ENCODE measurements at regions of chr13 and their contacts with region 1.

Region 1: DNA sequence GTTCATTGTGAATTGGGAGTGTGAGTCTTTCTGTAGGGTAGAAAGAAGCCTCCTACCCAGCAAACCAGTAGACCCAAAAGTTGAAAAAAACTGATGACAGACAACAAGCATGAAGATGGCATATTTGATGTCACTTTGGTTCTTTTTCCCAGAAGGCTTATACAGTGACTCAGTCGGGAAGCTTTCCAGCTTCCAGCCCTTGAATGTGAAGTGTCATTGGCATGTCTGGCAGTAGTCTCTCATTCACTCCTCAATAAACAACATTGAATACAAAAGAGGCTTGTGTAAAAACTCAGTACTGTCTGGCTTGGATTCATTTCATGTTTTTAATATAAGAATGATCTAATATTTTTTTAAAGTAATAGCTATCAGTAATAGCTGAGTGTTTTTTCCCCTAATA is 68.7 kb downstream of the IPO5 start:
- DNase-seq: no peak
- H3K4me3 ChIP-seq: no peak overlapping the region
- H3K27ac ChIP-seq: no peak overlapping the region
- H3K4me1 ChIP-seq: no peaks in the 10 kb centered on the region
- CTCF ChIP-seq: no peak

Region 2: GRCh38 chr13:97986835-97987234 is 35.4 kb before region 1 on chr13:
- CTCF ChIA-PET with region 1: no interaction called
- POLR2A ChIA-PET with region 1: no interaction called
- intact Hi-C with region 1: loop called (anchors 5 kb)
- DNase-seq: peak; percentile 9
- H3K4me3 ChIP-seq: no peak overlapping the region
- H3K27ac ChIP-seq: no peak overlapping the region
- H3K4me1 ChIP-seq: no peaks in the 10 kb centered on the region
- CTCF ChIP-seq: no peak